Breast epithelium (tissue), 4 donors: ENCODE measurements at regions of chr2 and their contacts with region 1.

Region 1: DNA sequence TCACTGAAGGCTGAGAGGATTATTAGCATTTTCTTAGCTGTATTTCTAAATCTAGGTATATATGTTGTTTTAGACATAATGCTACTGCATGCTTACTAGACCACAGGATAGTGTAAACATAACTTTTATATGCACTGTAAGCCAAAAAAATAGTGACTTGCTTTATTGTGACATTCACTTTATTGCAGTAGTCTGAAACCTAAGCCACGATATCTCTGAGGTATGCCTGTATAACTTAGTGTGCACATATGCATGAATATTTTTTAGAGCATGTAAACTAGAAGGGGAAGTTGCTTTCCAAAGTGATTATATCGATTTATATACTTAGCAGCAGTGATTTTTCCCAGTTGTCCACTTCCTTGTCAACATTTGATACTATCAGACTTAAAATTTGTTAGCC is 81.8 kb downstream of the SOS1 start:
- DNase-seq: no peak
- H3K4me3 ChIP-seq: no peak overlapping the region
- H3K27ac ChIP-seq: no peak overlapping the region
- H3K4me1 ChIP-seq: no peaks in the 10 kb centered on the region
- H3K27me3 ChIP-seq: no peaks in the 10 kb centered on the region
- CTCF ChIP-seq: no peak
- POLR2A ChIP-seq: no peak

Region 2: DNA sequence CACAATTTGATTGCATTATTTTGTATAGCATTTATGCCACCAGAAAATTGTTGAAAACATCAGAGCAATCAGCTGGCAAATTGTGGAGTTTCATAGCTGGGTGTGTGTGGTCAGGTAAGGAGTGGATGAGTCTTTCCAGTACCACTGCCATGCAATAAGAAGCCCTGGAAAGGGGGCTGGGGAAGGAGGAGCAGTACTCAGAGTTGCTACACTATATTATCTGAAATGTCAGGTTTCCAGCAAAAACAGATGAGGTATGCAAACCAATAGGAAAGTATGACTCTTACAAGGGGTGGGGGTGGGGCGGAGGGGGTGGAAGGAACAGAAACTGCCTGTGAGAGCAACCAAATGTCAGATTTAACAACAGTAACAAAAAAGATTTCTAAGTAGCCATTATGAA is 30.4 kb before region 1 on chr2:
- intact Hi-C with region 1: loop called (anchors 2 kb)
- DNase-seq: no peak
- H3K4me3 ChIP-seq: no peak overlapping the region
- H3K27ac ChIP-seq: no peak overlapping the region
- H3K4me1 ChIP-seq: no peaks in the 10 kb centered on the region
- H3K27me3 ChIP-seq: no peaks in the 10 kb centered on the region
- CTCF ChIP-seq: no peak
- POLR2A ChIP-seq: no peak

Region 3: GRCh38 chr2:39050109-39050508 is 11.0 kb after region 1 on chr2:
- intact Hi-C with region 1: no loop called
- DNase-seq: no peak
- H3K4me3 ChIP-seq: no peak overlapping the region
- H3K27ac ChIP-seq: no peak overlapping the region
- H3K4me1 ChIP-seq: no peaks in the 10 kb centered on the region
- H3K27me3 ChIP-seq: no peaks in the 10 kb centered on the region
- CTCF ChIP-seq: no peak
- POLR2A ChIP-seq: no peak